Thyroid gland (tissue), 4 donors: ENCODE measurements at regions of chr21 and their contacts with region 1.

Region 1: GRCh38 chr21:31198575-31198974 is 145.5 kb downstream of the TIAM1 start:
- DNase-seq: no peak
- H3K4me3 ChIP-seq: no peak overlapping the region
- H3K27ac ChIP-seq: no peak overlapping the region
- H3K4me1 ChIP-seq: peaks cover 0 to 13% of the 10 kb centered on the region in 2 donors
- H3K27me3 ChIP-seq: no peaks in the 10 kb centered on the region
- CTCF ChIP-seq: peak in 5 of 6 experiments; percentile 13 to 60 (median 53)
- POLR2A ChIP-seq: no peak

Region 2: GRCh38 chr21:31580866-31581276 is 382.3 kb after region 1 on chr21:
- intact Hi-C with region 1: loop called (anchors 5 kb)
- DNase-seq: peak; percentile 68 to 71
- H3K4me3 ChIP-seq: no peak overlapping the region
- H3K27ac ChIP-seq: no peak overlapping the region
- H3K4me1 ChIP-seq: no peaks in the 10 kb centered on the region
- H3K27me3 ChIP-seq: no peaks in the 10 kb centered on the region
- CTCF ChIP-seq: peak; percentile 45 to 75 (median 63)
- POLR2A ChIP-seq: no peak